Right lobe of liver (tissue), 6 donors: ENCODE measurements at regions of chr19 and their contacts with region 1.

Region 1: DNA sequence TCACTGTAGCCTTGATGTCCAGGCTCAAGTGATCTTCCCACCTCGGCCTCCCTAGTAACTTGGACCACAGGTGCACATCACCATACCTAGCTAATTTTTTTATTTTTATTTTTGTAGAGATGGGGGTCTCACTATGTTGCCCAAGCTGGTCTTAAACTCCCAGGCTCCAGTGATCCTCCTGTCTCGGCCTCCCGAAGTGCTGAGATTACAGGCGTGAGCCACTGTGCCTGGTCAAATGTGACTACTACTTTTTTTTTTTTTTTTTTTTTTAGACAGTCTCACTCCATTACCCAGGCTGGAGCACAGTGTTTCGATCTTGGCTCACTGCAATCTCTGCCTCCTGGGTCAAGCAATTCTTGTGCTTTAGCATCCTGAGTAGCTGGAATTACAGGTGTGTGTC is 20.6 kb upstream of the COX7A1 start:
- DNase-seq: no peak
- ATAC-seq: no peak
- H3K4me3 ChIP-seq: no peak overlapping the region
- H3K27ac ChIP-seq: no peak overlapping the region
- H3K4me1 ChIP-seq: no peaks in the 10 kb centered on the region
- H3K27me3 ChIP-seq: no peaks in the 10 kb centered on the region
- CTCF ChIP-seq: no peak
- POLR2A ChIP-seq: no peak

Region 2: DNA sequence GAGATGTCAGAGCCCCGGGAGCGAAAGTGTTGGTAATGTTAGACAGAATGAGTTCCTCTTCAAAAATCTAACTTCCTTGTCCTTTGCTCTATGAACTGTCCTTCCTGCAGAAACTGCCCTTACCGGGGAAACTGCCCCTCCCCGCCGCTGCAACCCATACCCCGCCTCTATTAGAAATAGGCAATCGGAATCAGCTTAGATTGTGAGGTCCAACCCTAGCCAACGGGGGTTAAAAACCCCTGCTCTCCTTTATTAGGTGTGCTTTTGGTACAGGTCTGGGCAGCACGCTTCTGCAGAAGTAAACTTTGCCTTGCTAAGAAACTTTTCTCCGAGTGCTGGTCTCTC is 44.5 kb before region 1 on chr19:
- intact Hi-C with region 1: loop called in 1 of 2 experiments (anchors 5 kb)
- DNase-seq: peak; percentile 55 to 71 (median 67)
- ATAC-seq: peak; percentile 53 to 60 (median 56)
- H3K4me3 ChIP-seq: peak overlapping the region; percentile 62 to 63 (median 62)
- H3K27ac ChIP-seq: peak overlapping the region; percentile 73 to 89 (median 84)
- H3K4me1 ChIP-seq: peaks cover 0 to 11% (median 0%) of the 10 kb centered on the region in 4 donors
- H3K27me3 ChIP-seq: no peaks in the 10 kb centered on the region
- CTCF ChIP-seq: no peak
- POLR2A ChIP-seq: peak; percentile 40

Region 3: GRCh38 chr19:36378625-36379509 is 206.0 kb after region 1 on chr19 and contains the start of gene ZFP14:
- intact Hi-C with region 1: no loop called
- DNase-seq: peak; percentile 96 to 97 (median 97)
- ATAC-seq: peak; percentile 99 to 100 (median 99)
- H3K4me3 ChIP-seq: peak within 1 kb of the TSS; percentile 58 to 84 (median 80)
- H3K27ac ChIP-seq: peak within 1 kb of the TSS; percentile 39 to 74 (median 51)
- H3K4me1 ChIP-seq: peaks cover 0 to 11% (median 3%) of the 10 kb centered on the region in 4 donors
- H3K27me3 ChIP-seq: no peaks in the 10 kb centered on the region
- CTCF ChIP-seq: peak in 1 of 4 donors; percentile 17
- POLR2A ChIP-seq: peak; percentile 75
- total RNA-seq, gene ZFP14: 1.1 to 1.9 (median 1.8) TPM